CD8-positive, alpha-beta T cell (primary cell): ENCODE measurements at regions of chr3 and their contacts with region 1.

Region 1: DNA sequence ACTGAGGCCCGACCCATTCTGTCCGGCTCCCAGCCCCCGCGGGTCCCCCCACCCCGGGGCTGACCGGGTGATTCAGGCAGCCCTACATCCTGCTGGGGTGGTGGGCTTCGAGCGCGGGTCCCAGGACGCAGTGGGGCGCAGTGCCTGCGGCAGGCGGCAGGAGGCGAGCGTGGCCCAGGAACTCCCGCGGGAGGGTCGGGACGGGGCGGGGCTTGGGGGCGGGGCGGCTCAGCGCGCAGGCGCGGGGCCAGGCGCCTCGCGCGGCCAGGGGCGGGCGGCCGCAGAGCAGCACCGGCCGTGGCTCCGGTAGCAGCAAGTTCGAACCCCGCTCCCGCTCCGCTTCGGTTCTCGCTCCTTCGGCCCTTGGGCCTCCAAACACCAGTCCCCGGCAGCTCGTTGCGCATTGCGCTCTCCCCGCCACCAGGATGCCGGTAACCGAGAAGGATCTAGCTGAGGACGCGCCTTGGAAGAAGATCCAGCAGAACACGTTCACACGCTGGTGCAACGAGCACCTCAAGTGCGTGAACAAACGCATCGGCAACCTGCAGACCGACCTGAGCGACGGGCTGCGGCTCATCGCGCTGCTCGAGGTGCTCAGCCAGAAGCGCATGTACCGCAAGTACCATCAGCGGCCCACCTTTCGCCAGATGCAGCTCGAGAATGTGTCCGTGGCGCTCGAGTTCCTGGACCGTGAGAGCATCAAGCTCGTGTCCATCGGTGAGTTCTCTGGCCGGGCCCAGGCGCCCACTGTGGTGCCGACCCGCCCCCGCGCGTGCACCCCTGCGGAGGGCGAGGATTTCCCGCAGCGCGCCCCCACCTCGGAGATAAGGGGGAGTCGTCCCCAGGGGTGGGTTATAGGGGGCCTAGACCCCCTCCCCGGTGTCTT is at the start of gene FLNB:
- DNase-seq: peak; percentile 62 to 87 (median 74)
- ATAC-seq: peak; percentile 86
- H3K4me3 ChIP-seq: peak within 1 kb of the TSS; percentile 85 to 97
- H3K4me3 Mint-ChIP-seq: peak within 1 kb of the TSS; percentile 86
- H3K27ac ChIP-seq: peak within 1 kb of the TSS; percentile 46 to 72
- H3K27ac Mint-ChIP-seq: peak within 1 kb of the TSS; percentile 84
- H3K4me1 ChIP-seq: peaks cover 40% of the 10 kb centered on the region
- H3K4me1 Mint-ChIP-seq: peaks cover 38% of the 10 kb centered on the region
- H3K27me3 ChIP-seq: no peaks in the 10 kb centered on the region
- H3K27me3 Mint-ChIP-seq: no peaks in the 10 kb centered on the region
- CTCF ChIP-seq: peak; percentile 77
- total RNA-seq, gene FLNB: 46.8 to 52.1 TPM

Region 2: GRCh38 chr3:56484122-56484521 is 1524.3 kb before region 1 on chr3:
- CTCF ChIA-PET with region 1: no interaction called
- POLR2A ChIA-PET with region 1: no interaction called
- intact Hi-C with region 1: no loop called
- DNase-seq: no peak
- ATAC-seq: no peak
- H3K4me3 ChIP-seq: no peak overlapping the region
- H3K4me3 Mint-ChIP-seq: no peak overlapping the region
- H3K27ac ChIP-seq: no peak overlapping the region
- H3K27ac Mint-ChIP-seq: no peak overlapping the region
- H3K4me1 ChIP-seq: no peaks in the 10 kb centered on the region
- H3K4me1 Mint-ChIP-seq: no peaks in the 10 kb centered on the region
- H3K27me3 ChIP-seq: peaks cover 0 to 5% of the 10 kb centered on the region in 2 experiments
- H3K27me3 Mint-ChIP-seq: peaks cover 37% of the 10 kb centered on the region
- CTCF ChIP-seq: no peak

Region 3: DNA sequence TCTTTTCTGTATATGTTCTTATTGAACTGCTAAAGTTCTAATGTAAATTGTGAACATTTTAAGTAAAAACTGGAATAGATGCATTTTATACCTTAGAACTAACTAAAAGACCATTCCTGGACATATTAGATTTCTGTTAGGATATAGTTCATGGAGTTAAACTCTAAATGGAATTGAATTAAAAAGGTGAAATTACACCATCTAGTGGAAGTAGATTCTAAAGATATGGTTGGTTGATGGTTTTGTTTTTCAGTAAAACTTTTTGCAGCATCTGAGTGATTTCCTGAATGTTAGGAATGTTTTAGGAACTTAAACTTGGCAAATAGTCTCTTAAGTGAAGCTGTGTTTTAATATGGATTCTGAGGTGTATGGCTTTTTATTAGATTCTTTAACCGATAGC is 155.5 kb before region 1 on chr3:
- CTCF ChIA-PET with region 1: no interaction called
- POLR2A ChIA-PET with region 1: no interaction called
- intact Hi-C with region 1: no loop called
- DNase-seq: peak in 1 of 9 experiments; percentile 3
- ATAC-seq: no peak
- H3K4me3 ChIP-seq: no peak overlapping the region
- H3K4me3 Mint-ChIP-seq: no peak overlapping the region
- H3K27ac ChIP-seq: no peak overlapping the region
- H3K27ac Mint-ChIP-seq: no peak overlapping the region
- H3K4me1 ChIP-seq: no peaks in the 10 kb centered on the region
- H3K4me1 Mint-ChIP-seq: no peaks in the 10 kb centered on the region
- H3K27me3 ChIP-seq: no peaks in the 10 kb centered on the region
- H3K27me3 Mint-ChIP-seq: no peaks in the 10 kb centered on the region
- CTCF ChIP-seq: peak; percentile 25

Region 4: DNA sequence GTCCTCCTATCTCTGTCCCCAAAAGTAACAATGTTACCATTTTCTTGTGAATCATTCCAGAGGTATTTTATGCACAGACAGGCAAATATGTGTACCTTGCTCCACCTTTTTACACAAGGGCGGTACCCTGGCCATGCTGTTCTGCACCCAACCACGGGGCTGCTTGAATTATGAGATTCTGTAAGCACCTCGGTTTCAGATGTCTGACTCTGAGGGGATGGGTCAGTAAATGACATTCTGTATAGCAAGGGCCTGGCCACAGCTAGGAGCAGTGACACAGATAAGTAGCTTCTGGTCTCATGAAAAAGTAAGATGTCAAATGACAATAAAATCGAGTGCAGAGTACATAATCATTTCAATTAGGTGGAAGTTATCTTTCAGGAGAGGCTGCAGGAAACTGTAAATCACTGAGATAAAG is 30.6 kb before region 1 on chr3:
- CTCF ChIA-PET with region 1: no interaction called
- POLR2A ChIA-PET with region 1: no interaction called
- intact Hi-C with region 1: no loop called
- DNase-seq: no peak
- ATAC-seq: no peak
- H3K4me3 ChIP-seq: no peak overlapping the region
- H3K4me3 Mint-ChIP-seq: no peak overlapping the region
- H3K27ac ChIP-seq: no peak overlapping the region
- H3K27ac Mint-ChIP-seq: no peak overlapping the region
- H3K4me1 ChIP-seq: peaks cover 3% of the 10 kb centered on the region
- H3K4me1 Mint-ChIP-seq: peaks cover 2% of the 10 kb centered on the region
- H3K27me3 ChIP-seq: no peaks in the 10 kb centered on the region
- H3K27me3 Mint-ChIP-seq: no peaks in the 10 kb centered on the region
- CTCF ChIP-seq: no peak

Region 5: DNA sequence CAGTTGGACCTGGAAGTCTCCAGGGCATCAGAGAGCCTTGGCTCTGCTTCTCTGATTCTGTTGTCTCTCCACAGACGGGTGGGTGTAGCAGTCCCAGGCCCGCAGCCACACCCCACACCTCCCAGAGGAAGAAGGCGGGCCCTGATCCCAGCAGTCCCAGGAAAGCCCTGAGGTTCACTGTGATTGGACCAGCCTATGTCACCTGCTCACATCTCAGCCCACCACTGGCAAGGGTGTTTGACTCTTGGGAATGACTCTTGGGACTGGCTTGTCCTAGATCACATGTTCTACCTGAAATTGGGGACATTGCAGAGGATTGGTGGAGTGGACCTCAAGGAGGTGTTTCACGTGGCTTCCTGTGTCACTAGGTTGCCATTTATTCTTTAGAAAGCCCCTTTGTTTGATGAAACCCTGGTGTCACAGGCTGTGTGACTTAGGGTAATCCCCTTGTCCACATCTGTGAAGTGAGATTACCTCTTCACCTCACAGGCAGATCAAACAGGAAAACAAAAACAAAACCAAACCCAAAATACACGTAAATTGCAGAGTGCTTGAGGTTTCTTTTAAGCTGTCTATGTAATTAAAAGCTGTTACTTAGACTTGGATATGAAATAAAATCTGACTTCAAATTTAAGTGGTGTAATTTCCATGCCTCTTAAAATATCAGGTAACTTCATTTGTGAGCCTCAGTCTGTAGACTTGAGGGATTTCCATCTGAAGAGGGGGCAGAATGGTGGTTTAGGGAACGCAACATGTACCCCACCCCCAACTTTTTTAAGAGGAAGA is 26.5 kb after region 1 on chr3:
- CTCF ChIA-PET with region 1: interaction called, 8 read pairs
- POLR2A ChIA-PET with region 1: interaction called, 4 read pairs
- intact Hi-C with region 1: loop called in 1 of 2 experiments (anchors 1 kb)
- DNase-seq: peak in 7 of 9 experiments; percentile 8 to 92 (median 33)
- ATAC-seq: peak; percentile 95
- H3K4me3 ChIP-seq: no peak overlapping the region
- H3K4me3 Mint-ChIP-seq: peak overlapping the region; percentile 66
- H3K27ac ChIP-seq: peak overlapping the region; percentile 18 to 54
- H3K27ac Mint-ChIP-seq: peak overlapping the region; percentile 96
- H3K4me1 ChIP-seq: peaks cover 38% of the 10 kb centered on the region
- H3K4me1 Mint-ChIP-seq: peaks cover 62% of the 10 kb centered on the region
- H3K27me3 ChIP-seq: no peaks in the 10 kb centered on the region
- H3K27me3 Mint-ChIP-seq: no peaks in the 10 kb centered on the region
- CTCF ChIP-seq: no peak

Region 6: DNA sequence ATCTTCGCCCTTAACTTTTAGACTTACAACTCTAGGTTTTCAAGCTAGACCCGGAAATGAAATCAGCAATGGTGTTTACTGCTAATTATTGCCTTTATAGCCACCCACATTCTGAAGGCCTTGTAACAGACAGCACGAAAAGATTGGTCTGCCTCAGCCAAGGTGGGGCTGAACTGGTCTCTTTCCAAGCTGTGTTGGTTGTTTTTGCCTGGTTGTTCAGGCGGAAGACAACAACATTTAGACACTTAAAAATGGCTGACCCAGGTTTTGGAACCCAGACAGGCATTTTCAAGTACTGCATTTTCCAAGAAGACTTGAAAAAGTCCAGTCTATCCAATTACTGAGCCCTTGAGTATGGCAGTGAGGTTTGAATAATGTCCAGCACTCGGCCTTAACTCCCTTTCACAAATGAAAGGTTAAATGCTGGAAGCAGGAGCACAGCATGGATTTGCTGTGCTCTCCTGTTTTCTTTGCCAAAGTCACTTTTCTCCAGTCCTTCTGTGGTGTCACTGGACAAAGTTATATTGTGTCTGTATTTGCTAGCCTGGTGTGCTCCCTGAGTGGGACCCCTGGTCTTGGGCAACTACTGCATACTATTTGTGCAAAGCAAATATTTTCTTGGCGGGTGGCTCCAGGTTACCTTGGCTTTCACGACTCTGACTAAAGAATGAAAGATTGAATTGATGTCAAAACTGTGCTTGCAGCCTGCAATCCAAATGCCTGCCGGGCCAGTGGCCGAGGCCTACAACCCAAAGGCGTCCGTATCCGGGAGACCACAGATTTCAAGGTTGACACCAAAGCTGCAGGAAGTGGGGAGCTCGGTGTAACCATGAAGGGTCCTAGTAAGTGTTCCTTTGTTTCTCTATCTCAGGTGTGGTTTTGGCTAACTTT is 93.4 kb after region 1 on chr3:
- CTCF ChIA-PET with region 1: interaction called, 10 read pairs
- POLR2A ChIA-PET with region 1: no interaction called
- intact Hi-C with region 1: loop called in 1 of 2 experiments (anchors 5 kb)
- DNase-seq: no peak
- ATAC-seq: no peak
- H3K4me3 ChIP-seq: no peak overlapping the region
- H3K4me3 Mint-ChIP-seq: no peak overlapping the region
- H3K27ac ChIP-seq: no peak overlapping the region
- H3K27ac Mint-ChIP-seq: no peak overlapping the region
- H3K4me1 ChIP-seq: peaks cover 33% of the 10 kb centered on the region
- H3K4me1 Mint-ChIP-seq: peaks cover 34% of the 10 kb centered on the region
- H3K27me3 ChIP-seq: no peaks in the 10 kb centered on the region
- H3K27me3 Mint-ChIP-seq: no peaks in the 10 kb centered on the region
- CTCF ChIP-seq: no peak

Region 7: DNA sequence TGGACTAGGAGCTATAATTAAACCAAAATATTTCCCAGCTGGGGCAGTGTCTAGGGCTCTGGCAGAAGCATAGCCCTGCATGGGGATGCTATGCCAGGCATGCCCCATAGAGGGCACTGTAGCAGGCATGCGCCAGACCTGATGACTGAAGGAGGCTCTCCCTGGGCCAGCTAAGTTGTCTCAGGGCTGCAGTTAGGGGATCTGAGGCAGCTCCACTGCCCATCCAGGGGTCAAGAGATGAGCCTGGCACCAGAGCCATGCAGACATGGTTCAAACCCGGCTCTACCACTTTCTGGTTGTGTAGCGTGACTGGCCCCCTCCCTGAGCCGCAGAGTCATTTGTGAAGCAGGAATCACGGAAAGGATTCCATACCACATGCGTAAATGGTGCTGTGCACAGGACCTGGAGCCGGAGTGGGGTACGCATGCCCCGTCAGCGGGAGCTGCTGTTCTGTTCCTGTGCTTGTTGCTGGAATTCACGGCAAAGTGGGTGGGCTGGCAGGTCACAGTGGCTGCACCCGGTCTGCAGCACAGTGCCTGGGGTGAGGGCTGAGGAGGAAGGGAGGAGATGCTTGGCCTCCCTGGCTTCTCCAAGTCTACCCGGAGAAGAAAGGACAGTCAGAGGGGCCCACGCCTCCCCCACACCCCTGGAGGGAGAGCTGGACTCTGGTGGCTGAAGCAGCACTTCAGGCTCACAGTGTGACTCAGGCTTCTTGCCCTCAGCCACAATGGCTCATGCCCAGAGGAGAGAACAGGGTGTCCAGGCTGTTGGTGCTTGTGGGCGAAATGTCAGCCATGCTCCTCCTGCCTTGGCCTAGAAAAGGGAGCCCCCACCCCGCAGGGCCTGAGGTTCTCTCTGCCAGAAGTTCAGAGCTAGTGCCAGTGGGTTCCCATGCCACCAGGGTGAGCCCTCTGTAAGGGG is 159.3 kb after region 1 on chr3:
- CTCF ChIA-PET with region 1: interaction called, 41 read pairs
- POLR2A ChIA-PET with region 1: interaction called, 3 read pairs
- intact Hi-C with region 1: no loop called
- DNase-seq: peak in 8 of 9 experiments; percentile 35 to 70 (median 55)
- ATAC-seq: peak; percentile 91
- H3K4me3 ChIP-seq: no peak overlapping the region
- H3K4me3 Mint-ChIP-seq: no peak overlapping the region
- H3K27ac ChIP-seq: no peak overlapping the region
- H3K27ac Mint-ChIP-seq: no peak overlapping the region
- H3K4me1 ChIP-seq: no peaks in the 10 kb centered on the region
- H3K4me1 Mint-ChIP-seq: no peaks in the 10 kb centered on the region
- H3K27me3 ChIP-seq: no peaks in the 10 kb centered on the region
- H3K27me3 Mint-ChIP-seq: no peaks in the 10 kb centered on the region
- CTCF ChIP-seq: peak; percentile 66

Region 8: GRCh38 chr3:58237238-58237940 is 229.0 kb after region 1 on chr3 and contains the start of gene ABHD6:
- CTCF ChIA-PET with region 1: interaction called, 3 read pairs
- POLR2A ChIA-PET with region 1: no interaction called
- intact Hi-C with region 1: loop called (anchors 1 to 5 kb)
- DNase-seq: peak; percentile 73 to 92 (median 83)
- ATAC-seq: peak; percentile 84
- H3K4me3 ChIP-seq: peak within 1 kb of the TSS; percentile 57 to 79
- H3K4me3 Mint-ChIP-seq: peak within 1 kb of the TSS; percentile 92
- H3K27ac ChIP-seq: peak within 1 kb of the TSS; percentile 38 to 49
- H3K27ac Mint-ChIP-seq: peak within 1 kb of the TSS; percentile 87
- H3K4me1 ChIP-seq: peaks cover 7% of the 10 kb centered on the region
- H3K4me1 Mint-ChIP-seq: peaks cover 17% of the 10 kb centered on the region
- H3K27me3 ChIP-seq: no peaks in the 10 kb centered on the region
- H3K27me3 Mint-ChIP-seq: peaks cover 14% of the 10 kb centered on the region
- CTCF ChIP-seq: no peak
- total RNA-seq, gene ABHD6: 1.9 to 2.1 TPM